ENCODE measurements at regions of chr11 and their contacts with region 1.

Region 1: DNA sequence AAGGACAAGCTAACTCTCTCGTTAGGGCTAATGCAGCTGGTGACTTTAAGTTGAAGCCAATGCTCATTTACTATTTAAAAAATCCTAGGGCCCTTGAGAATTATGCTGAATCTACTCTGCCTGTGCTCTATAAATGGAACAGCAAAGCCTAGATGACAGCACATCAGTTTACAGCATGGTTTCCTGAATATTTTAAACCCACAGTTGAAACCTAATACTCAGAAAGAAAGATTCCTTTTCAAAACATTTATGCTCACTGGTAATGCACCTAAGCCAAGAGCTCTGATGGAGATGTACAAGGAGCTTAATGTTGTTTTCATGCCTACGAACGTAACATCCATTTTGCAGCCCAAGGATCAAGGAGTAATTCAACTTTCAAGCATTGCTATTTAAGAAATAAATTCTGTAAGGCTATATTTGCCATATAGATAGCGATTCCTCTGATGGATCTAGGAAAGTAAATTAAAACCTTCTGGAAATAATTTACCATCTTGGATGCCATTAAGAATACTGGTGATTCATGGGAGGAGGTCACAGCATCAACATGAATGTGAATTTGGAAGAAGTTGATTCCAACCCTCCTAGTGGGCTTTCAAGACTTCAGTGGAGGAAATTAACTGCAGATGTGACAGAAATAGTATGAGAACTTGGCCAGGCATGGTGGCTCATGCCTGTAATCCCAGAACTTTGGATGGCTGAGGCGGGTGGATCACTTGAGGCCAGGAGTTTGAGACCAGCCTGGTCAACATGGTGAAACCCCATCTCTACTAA is 14.5 kb downstream of the XNDC1N start:
- DNase-seq: no peak
- H3K4me3 ChIP-seq: no peak overlapping the region
- H3K4me3 Mint-ChIP-seq: no peak overlapping the region
- H3K27ac Mint-ChIP-seq: no peak overlapping the region
- H3K4me1 ChIP-seq: peaks cover 34% of the 10 kb centered on the region
- H3K4me1 Mint-ChIP-seq: peaks cover 23% of the 10 kb centered on the region
- H3K27me3 ChIP-seq: no peaks in the 10 kb centered on the region
- H3K27me3 Mint-ChIP-seq: no peaks in the 10 kb centered on the region
- CTCF ChIP-seq: no peak

Region 2: DNA sequence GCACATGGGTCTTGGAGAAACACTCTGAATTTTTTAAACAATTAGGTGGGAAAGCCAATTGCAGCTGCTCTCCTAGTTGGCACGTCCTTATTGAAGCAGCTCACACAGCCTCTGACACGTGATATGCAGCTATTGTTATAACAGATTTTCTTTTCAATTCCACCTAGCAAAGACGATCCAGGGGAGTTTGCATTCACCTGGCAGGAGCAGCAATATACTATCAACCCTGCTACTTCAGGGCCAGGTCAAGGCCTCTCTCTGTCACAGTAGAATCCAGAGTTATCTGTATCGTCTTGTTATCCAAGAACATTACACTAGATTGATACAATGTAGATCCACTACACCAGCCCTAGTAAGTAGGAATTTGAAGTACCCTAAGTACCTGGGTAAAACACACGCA is 339.5 kb before region 1 on chr11:
- CTCF ChIA-PET with region 1: no interaction called
- POLR2A ChIA-PET with region 1: no interaction called
- intact Hi-C with region 1: no loop called
- DNase-seq: no peak
- H3K4me3 ChIP-seq: no peak overlapping the region
- H3K4me3 Mint-ChIP-seq: no peak overlapping the region
- H3K27ac Mint-ChIP-seq: no peak overlapping the region
- H3K4me1 ChIP-seq: peaks cover 6% of the 10 kb centered on the region
- H3K4me1 Mint-ChIP-seq: peaks cover 6% of the 10 kb centered on the region
- H3K27me3 ChIP-seq: no peaks in the 10 kb centered on the region
- H3K27me3 Mint-ChIP-seq: no peaks in the 10 kb centered on the region
- CTCF ChIP-seq: no peak

Region 3: GRCh38 chr11:71946144-71946571 is 32.2 kb after region 1 on chr11:
- CTCF ChIA-PET with region 1: no interaction called
- POLR2A ChIA-PET with region 1: no interaction called
- intact Hi-C with region 1: loop called (anchors 1 kb)
- DNase-seq: no peak
- H3K4me3 ChIP-seq: no peak overlapping the region
- H3K4me3 Mint-ChIP-seq: peak overlapping the region; percentile 37
- H3K27ac Mint-ChIP-seq: peak overlapping the region; percentile 94
- H3K4me1 ChIP-seq: peaks cover 69% of the 10 kb centered on the region
- H3K4me1 Mint-ChIP-seq: peaks cover 42% of the 10 kb centered on the region
- H3K27me3 ChIP-seq: no peaks in the 10 kb centered on the region
- H3K27me3 Mint-ChIP-seq: no peaks in the 10 kb centered on the region
- CTCF ChIP-seq: no peak